CD14-positive monocyte (primary cell): ENCODE measurements at regions of chr2 and their contacts with region 1.

Region 1: GRCh38 chr2:127591221-127591923 is 54.6 kb upstream of the GPR17 start:
- DNase-seq: peak; percentile 42 to 63 (median 59)
- H3K4me3 ChIP-seq: no peak overlapping the region
- H3K4me3 Mint-ChIP-seq: no peak overlapping the region
- H3K27ac ChIP-seq: no peak overlapping the region
- H3K27ac Mint-ChIP-seq: no peak overlapping the region
- H3K4me1 ChIP-seq: no peaks in the 10 kb centered on the region
- H3K4me1 Mint-ChIP-seq: peaks cover 3% of the 10 kb centered on the region
- H3K27me3 ChIP-seq: no peaks in the 10 kb centered on the region
- H3K27me3 Mint-ChIP-seq: no peaks in the 10 kb centered on the region
- CTCF ChIP-seq: peak; percentile 85

Region 2: DNA sequence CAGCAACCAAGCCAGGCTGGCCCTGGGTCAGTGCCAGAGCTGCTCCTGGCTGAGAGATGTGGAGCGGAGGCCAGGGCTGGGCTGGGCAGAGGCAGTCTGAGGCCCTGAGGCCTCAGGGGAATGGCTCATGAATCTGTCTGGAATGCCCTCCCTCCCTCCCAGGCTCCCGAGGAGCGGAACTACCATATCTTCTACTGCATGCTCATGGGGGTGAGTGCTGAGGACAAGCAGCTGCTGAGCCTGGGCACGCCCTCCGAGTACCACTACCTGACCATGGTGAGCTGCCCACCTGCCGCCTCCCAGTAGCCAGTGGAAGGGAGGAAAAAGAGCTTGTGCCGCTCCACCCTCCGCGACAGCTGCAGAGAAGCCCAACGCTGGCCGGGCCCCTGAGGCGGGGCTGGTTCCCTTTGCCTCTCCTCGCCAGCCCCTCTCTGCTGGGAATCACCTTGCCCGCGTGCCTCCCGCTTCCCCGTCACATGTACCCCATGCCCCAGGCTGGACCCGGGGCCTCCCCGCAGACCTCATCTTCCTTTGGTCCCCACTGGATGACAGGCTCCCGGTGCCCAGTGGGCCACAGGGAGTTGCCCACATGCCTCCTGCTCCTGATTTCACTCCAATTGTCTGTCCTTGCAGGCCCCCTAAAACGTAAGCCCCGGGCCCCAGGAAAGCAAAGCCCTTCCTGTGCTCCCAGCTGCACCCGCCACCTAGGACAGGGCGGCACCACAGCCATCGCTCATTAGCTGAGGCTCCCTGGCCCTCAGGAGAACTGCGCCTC is 14.8 kb before region 1 on chr2:
- intact Hi-C with region 1: no loop called
- DNase-seq: no peak
- H3K4me3 ChIP-seq: no peak overlapping the region
- H3K4me3 Mint-ChIP-seq: no peak overlapping the region
- H3K27ac ChIP-seq: no peak overlapping the region
- H3K27ac Mint-ChIP-seq: peak overlapping the region in 1 of 7 donors; percentile 12
- H3K4me1 ChIP-seq: peaks cover 23 to 24% of the 10 kb centered on the region in 2 donors
- H3K4me1 Mint-ChIP-seq: peaks cover 28% of the 10 kb centered on the region
- H3K27me3 ChIP-seq: no peaks in the 10 kb centered on the region
- H3K27me3 Mint-ChIP-seq: peaks cover 0 to 3% (median 0%) of the 10 kb centered on the region in 3 donors
- CTCF ChIP-seq: no peak

Region 3: DNA sequence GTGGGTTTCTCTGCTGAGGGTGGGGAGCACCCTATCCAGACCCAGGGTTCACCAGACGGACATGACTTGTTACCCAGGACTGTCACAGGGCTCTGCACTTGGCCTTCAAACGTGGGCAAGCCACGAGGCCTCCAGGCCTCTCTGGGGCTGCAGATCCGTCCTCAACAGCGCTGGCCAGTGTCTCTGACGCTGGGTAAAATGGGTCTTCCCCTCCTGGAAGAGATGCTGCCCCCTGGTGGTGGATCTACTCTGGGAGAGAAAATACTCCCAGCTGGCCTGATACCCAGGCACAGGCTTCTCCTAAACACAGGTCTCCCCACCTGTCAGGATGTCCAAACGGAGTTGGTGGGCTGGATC is 58.3 kb after region 1 on chr2:
- intact Hi-C with region 1: loop called (anchors 2 kb)
- DNase-seq: peak; percentile 80 to 84 (median 84)
- H3K4me3 ChIP-seq: no peak overlapping the region
- H3K4me3 Mint-ChIP-seq: peak overlapping the region in 1 of 2 donors; percentile 34
- H3K27ac ChIP-seq: no peak overlapping the region
- H3K27ac Mint-ChIP-seq: peak overlapping the region in 2 of 7 donors; percentile 26 to 36
- H3K4me1 ChIP-seq: peaks cover 17 to 23% of the 10 kb centered on the region in 2 donors
- H3K4me1 Mint-ChIP-seq: peaks cover 29% of the 10 kb centered on the region
- H3K27me3 ChIP-seq: no peaks in the 10 kb centered on the region
- H3K27me3 Mint-ChIP-seq: peaks cover 2 to 9% (median 7%) of the 10 kb centered on the region in 3 donors
- CTCF ChIP-seq: peak; percentile 88